CD8-positive, alpha-beta T cell (primary cell): ENCODE measurements at regions of chr2 and their contacts with region 1.

Region 1: DNA sequence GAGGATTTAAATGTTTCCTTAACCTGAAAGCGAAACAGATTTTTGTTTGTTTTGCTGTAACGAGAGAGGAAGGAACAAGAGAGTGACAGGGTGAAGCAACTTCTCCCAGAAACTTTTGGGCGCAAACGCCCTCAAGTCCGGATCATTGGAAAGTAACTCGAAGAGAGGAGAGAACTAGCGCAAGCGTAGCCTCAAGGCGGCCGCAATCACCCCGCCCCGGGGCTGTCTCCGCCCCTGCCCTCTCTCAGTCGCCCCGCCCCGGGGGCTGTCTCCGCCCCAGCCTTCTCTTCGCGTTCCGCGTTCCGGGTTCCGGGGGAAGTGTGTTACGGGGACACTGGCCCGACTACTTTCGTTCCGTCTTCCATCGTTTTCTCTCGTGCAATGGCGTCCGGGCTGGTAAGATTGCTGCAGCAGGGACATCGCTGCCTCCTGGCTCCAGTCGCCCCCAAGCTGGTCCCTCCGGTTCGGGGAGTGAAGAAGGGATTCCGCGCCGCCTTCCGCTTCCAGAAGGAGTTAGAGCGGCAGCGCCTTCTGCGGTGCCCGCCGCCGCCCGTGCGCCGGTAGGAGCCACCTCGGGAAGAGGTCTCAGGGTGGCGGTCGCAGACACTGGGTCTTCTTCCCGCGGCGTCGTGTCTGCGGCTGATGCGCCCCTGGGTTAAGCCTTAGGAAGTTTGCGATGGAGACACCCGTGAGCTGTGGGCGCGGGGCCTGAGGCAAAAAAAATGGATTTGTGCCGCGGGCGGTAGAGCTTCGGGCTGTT is at the start of gene MRPL44:
- DNase-seq: peak; percentile 94 to 99 (median 96)
- ATAC-seq: peak; percentile 99
- H3K4me3 ChIP-seq: peak within 1 kb of the TSS; percentile 90 to 93
- H3K4me3 Mint-ChIP-seq: peak within 1 kb of the TSS; percentile 94
- H3K27ac ChIP-seq: peak within 1 kb of the TSS; percentile 75 to 78
- H3K27ac Mint-ChIP-seq: peak within 1 kb of the TSS; percentile 94
- H3K4me1 ChIP-seq: peaks cover 41% of the 10 kb centered on the region
- H3K4me1 Mint-ChIP-seq: peaks cover 50% of the 10 kb centered on the region
- H3K27me3 ChIP-seq: no peaks in the 10 kb centered on the region
- H3K27me3 Mint-ChIP-seq: no peaks in the 10 kb centered on the region
- CTCF ChIP-seq: no peak
- total RNA-seq, gene MRPL44: 41.4 to 41.9 TPM

Region 2: DNA sequence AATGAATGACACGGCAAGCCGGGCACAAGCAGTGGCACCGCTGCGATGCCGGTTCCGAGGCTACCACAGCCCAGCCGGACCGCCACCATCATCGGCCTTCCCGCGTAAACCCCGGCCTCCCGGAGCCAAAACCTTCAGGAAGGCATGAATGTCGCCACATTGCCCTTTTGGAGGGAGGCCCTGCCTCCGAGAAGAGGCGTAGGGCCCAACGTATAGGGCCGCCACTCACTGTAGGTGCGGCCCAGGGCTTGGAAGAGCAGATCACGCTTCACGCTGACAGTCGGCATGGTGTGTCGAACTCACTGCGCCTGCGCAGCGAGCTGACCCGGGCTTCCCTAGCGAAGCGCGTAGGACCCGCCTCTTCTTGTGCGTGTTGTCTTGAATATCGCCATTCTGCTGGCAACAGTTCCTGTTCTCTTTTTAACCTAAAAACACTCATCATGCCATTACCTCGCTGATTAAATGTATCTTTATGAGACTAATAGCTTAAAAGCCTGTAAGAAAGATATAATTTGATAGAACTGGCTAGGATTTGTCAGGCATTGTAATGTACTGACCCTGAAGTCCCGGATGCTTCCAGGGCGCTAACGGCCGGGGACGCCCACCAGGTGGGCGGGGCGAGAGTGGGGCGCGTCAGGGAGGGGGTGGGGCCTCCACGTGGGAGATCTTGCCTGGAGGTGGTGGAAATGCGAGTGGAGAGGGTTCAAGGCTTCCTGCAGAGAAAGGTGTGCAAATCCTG is 1301.3 kb before region 1 on chr2 and contains the start of gene FARSB:
- CTCF ChIA-PET with region 1: no interaction called
- POLR2A ChIA-PET with region 1: no interaction called
- intact Hi-C with region 1: loop called in 1 of 2 experiments (anchors 5 kb)
- DNase-seq: peak; percentile 83 to 98 (median 92)
- ATAC-seq: peak; percentile 92
- H3K4me3 ChIP-seq: peak within 1 kb of the TSS; percentile 87 to 94
- H3K4me3 Mint-ChIP-seq: peak within 1 kb of the TSS; percentile 97
- H3K27ac ChIP-seq: peak within 1 kb of the TSS; percentile 89 to 95
- H3K27ac Mint-ChIP-seq: peak within 1 kb of the TSS; percentile 100
- H3K4me1 ChIP-seq: peaks cover 28% of the 10 kb centered on the region
- H3K4me1 Mint-ChIP-seq: peaks cover 44% of the 10 kb centered on the region
- H3K27me3 ChIP-seq: no peaks in the 10 kb centered on the region
- H3K27me3 Mint-ChIP-seq: no peaks in the 10 kb centered on the region
- CTCF ChIP-seq: no peak
- total RNA-seq, gene FARSB: 7.2 to 8.5 TPM

Region 3: GRCh38 chr2:223760838-223761502 is 196.3 kb before region 1 on chr2:
- CTCF ChIA-PET with region 1: no interaction called
- POLR2A ChIA-PET with region 1: no interaction called
- intact Hi-C with region 1: loop called in 1 of 2 experiments (anchors 5 kb)
- DNase-seq: peak; percentile 21 to 89 (median 56)
- ATAC-seq: peak; percentile 87
- H3K4me3 ChIP-seq: peak overlapping the region in 1 of 2 experiments; percentile 26
- H3K4me3 Mint-ChIP-seq: peak overlapping the region; percentile 53
- H3K27ac ChIP-seq: peak overlapping the region; percentile 34 to 81
- H3K27ac Mint-ChIP-seq: peak overlapping the region; percentile 88
- H3K4me1 ChIP-seq: no peaks in the 10 kb centered on the region
- H3K4me1 Mint-ChIP-seq: peaks cover 20% of the 10 kb centered on the region
- H3K27me3 ChIP-seq: no peaks in the 10 kb centered on the region
- H3K27me3 Mint-ChIP-seq: no peaks in the 10 kb centered on the region
- CTCF ChIP-seq: peak; percentile 24

Region 4: GRCh38 chr2:223896833-223897311 is 60.4 kb before region 1 on chr2:
- CTCF ChIA-PET with region 1: no interaction called
- POLR2A ChIA-PET with region 1: no interaction called
- intact Hi-C with region 1: loop called in 1 of 2 experiments (anchors 5 kb)
- DNase-seq: peak in 2 of 9 experiments; percentile 32
- ATAC-seq: no peak
- H3K4me3 ChIP-seq: no peak overlapping the region
- H3K4me3 Mint-ChIP-seq: no peak overlapping the region
- H3K27ac ChIP-seq: peak overlapping the region in 1 of 2 experiments; percentile 29
- H3K27ac Mint-ChIP-seq: no peak overlapping the region
- H3K4me1 ChIP-seq: no peaks in the 10 kb centered on the region
- H3K4me1 Mint-ChIP-seq: peaks cover 5% of the 10 kb centered on the region
- H3K27me3 ChIP-seq: no peaks in the 10 kb centered on the region
- H3K27me3 Mint-ChIP-seq: no peaks in the 10 kb centered on the region
- CTCF ChIP-seq: no peak

Region 5: DNA sequence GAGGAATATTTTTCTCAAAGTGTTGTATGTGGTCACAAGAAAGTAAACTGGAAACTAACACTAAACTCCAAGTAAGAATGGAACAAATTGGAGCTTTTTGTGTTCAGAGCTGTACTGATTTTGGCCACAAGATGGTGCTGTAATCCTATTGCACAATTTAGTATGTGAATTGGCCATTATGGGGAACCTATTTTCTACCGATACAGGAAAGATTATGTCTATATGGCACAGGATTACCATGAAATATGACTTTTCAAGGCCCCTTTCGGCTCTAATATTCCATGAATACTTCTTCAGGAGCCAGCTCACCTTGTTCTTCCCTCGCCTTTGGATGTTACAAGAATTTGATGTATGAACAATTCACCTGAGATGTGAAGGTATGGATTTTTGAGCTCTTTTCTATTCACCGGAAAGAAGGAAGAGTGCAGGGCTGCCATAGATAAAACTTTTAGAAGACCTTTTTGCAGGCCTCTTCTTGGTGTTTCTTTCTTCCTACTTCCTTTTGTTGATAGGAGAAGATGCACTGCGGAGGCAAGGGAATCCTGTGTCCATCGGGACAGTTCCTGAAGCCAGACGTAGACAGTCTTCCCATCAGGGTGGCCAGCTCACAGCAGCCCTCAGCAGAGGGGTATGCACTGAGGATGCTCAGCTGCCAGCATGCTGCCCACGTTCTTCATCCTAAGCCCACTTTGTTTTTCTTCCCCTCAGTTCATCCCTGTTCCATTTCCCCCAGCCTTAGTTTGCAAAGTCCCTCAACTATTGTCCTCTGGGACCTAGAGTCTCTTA is 13.3 kb after region 1 on chr2:
- CTCF ChIA-PET with region 1: interaction called, 28 read pairs
- POLR2A ChIA-PET with region 1: interaction called, 3 read pairs
- intact Hi-C with region 1: no loop called
- DNase-seq: peak; percentile 16 to 75 (median 55)
- ATAC-seq: peak; percentile 72
- H3K4me3 ChIP-seq: no peak overlapping the region
- H3K4me3 Mint-ChIP-seq: no peak overlapping the region
- H3K27ac ChIP-seq: no peak overlapping the region
- H3K27ac Mint-ChIP-seq: no peak overlapping the region
- H3K4me1 ChIP-seq: no peaks in the 10 kb centered on the region
- H3K4me1 Mint-ChIP-seq: peaks cover 4% of the 10 kb centered on the region
- H3K27me3 ChIP-seq: no peaks in the 10 kb centered on the region
- H3K27me3 Mint-ChIP-seq: no peaks in the 10 kb centered on the region
- CTCF ChIP-seq: peak; percentile 96

Region 6: DNA sequence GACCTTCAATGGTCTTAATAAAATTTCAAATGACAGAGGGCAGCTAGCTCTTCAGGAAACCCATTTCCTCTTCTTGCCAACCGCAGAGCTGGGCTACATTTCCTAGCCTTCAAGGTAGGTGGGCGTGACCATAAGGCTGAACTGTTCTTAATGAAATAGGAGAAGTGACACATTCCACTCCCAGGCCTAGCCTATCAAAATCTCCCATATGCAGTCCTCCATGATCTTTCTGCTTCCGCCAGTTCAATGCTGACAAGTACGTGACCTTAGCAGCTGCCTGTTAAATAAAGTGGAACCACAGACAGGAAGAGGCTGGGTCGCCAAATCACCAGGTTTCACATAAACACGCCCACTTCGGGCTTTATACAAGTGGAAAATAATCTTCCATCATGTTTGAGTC is 68.6 kb after region 1 on chr2:
- CTCF ChIA-PET with region 1: no interaction called
- POLR2A ChIA-PET with region 1: no interaction called
- intact Hi-C with region 1: no loop called
- DNase-seq: peak in 7 of 9 experiments; percentile 27 to 81 (median 59)
- ATAC-seq: peak; percentile 92
- H3K4me3 ChIP-seq: peak overlapping the region in 1 of 2 experiments; percentile 1
- H3K4me3 Mint-ChIP-seq: peak overlapping the region; percentile 44
- H3K27ac ChIP-seq: peak overlapping the region in 1 of 2 experiments; percentile 65
- H3K27ac Mint-ChIP-seq: peak overlapping the region; percentile 78
- H3K4me1 ChIP-seq: peaks cover 54% of the 10 kb centered on the region
- H3K4me1 Mint-ChIP-seq: peaks cover 60% of the 10 kb centered on the region
- H3K27me3 ChIP-seq: no peaks in the 10 kb centered on the region
- H3K27me3 Mint-ChIP-seq: no peaks in the 10 kb centered on the region
- CTCF ChIP-seq: no peak

Region 7: GRCh38 chr2:224585205-224586088 is 628.2 kb after region 1 on chr2 and contains the start of gene CUL3:
- CTCF ChIA-PET with region 1: no interaction called
- POLR2A ChIA-PET with region 1: interaction called, 3 read pairs
- intact Hi-C with region 1: loop called (anchors 1 to 5 kb)
- DNase-seq: peak; percentile 98 to 100 (median 99)
- ATAC-seq: peak; percentile 91
- H3K4me3 ChIP-seq: peak within 1 kb of the TSS; percentile 78 to 82
- H3K4me3 Mint-ChIP-seq: peak within 1 kb of the TSS; percentile 98
- H3K27ac ChIP-seq: peak within 1 kb of the TSS; percentile 62 to 84
- H3K27ac Mint-ChIP-seq: peak within 1 kb of the TSS; percentile 95
- H3K4me1 ChIP-seq: peaks cover 37% of the 10 kb centered on the region
- H3K4me1 Mint-ChIP-seq: peaks cover 42% of the 10 kb centered on the region
- H3K27me3 ChIP-seq: no peaks in the 10 kb centered on the region
- H3K27me3 Mint-ChIP-seq: no peaks in the 10 kb centered on the region
- CTCF ChIP-seq: no peak
- total RNA-seq, gene CUL3: 119 to 121 TPM

Region 8: DNA sequence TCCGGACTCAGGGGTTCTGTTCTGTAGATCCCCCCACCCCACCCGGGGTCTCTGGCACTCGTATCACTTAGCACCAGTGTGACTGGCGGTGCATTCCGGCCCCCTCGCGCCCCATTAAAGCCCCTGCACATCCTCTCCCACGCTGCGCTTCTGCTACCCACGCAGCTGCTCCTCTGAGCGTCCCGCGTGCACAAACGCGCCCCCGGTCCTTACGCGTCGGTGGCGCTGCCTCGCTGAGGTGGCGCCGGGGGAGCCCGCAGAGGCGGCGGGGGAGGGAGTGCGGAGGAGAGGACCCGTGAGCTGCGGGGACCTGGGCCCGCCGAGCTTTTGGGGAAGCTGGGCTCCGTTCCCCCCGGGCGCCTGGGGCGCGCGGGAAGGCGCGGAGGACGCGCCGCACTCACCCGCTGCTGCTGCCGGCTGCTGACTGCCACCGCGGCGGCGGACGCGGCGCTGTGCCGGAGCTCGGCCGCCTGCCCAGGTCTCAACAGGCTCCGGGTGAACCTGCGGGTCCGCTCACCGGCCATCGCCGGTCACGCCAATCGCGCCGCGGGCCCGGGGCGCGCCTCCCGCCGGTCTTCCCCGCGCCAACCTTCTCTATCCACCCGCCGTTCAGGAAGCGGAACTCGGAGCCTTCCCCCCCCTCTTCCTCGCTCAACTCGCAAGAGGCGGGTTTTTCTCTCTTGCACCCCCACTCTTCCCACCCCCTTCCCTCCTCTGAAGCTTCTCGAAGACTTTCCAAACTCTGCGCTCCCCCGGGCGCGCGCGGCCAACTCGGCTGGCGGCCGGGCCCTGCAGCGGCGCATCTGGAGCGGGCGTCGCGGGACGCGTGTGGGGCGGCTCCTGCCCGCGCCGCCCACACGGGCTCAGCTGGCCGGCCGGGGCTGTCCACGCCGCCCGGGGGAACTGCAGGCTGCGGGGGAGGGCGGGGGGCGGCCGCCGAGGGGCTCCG is 1084.9 kb after region 1 on chr2 and contains the start of gene DOCK10:
- CTCF ChIA-PET with region 1: no interaction called
- POLR2A ChIA-PET with region 1: no interaction called
- intact Hi-C with region 1: loop called in 1 of 2 experiments (anchors 10 kb)
- DNase-seq: peak; percentile 29 to 81 (median 57)
- ATAC-seq: peak; percentile 60
- H3K4me3 ChIP-seq: peak within 1 kb of the TSS; percentile 87 to 88
- H3K4me3 Mint-ChIP-seq: peak within 1 kb of the TSS; percentile 98
- H3K27ac ChIP-seq: peak within 1 kb of the TSS; percentile 73 to 77
- H3K27ac Mint-ChIP-seq: peak within 1 kb of the TSS; percentile 97
- H3K4me1 ChIP-seq: peaks cover 50% of the 10 kb centered on the region
- H3K4me1 Mint-ChIP-seq: peaks cover 55% of the 10 kb centered on the region
- H3K27me3 ChIP-seq: no peaks in the 10 kb centered on the region
- H3K27me3 Mint-ChIP-seq: no peaks in the 10 kb centered on the region
- CTCF ChIP-seq: no peak
- total RNA-seq, gene DOCK10: 183 to 188 TPM